ENCODE measurements at regions of chr5 and their contacts with region 1.

Region 1: GRCh38 chr5:175718401-175719108 is 60.7 kb downstream of the HRH2 start:
- DNase-seq: peak in 2 of 4 donors; percentile 44 to 90
- ATAC-seq: peak; percentile 58
- H3K4me3 ChIP-seq: no peak overlapping the region
- H3K27ac ChIP-seq: no peak overlapping the region
- H3K4me1 ChIP-seq: no peaks in the 10 kb centered on the region
- H3K27me3 ChIP-seq: peaks cover 0 to 9% of the 10 kb centered on the region in 2 donors
- CTCF ChIP-seq: peak; percentile 56 to 62

Region 2: GRCh38 chr5:175534070-175534932 is 184.3 kb before region 1 on chr5:
- intact Hi-C with region 1: loop called (anchors 5 to 10 kb)
- DNase-seq: peak; percentile 53 to 98 (median 80)
- ATAC-seq: peak; percentile 100
- H3K4me3 ChIP-seq: no peak overlapping the region
- H3K27ac ChIP-seq: no peak overlapping the region
- H3K4me1 ChIP-seq: peaks cover 0 to 15% of the 10 kb centered on the region in 2 donors
- H3K27me3 ChIP-seq: no peaks in the 10 kb centered on the region
- CTCF ChIP-seq: peak; percentile 97 to 98

Region 3: GRCh38 chr5:175752826-175753535 is 34.4 kb after region 1 on chr5:
- intact Hi-C with region 1: no loop called
- DNase-seq: no peak
- ATAC-seq: no peak
- H3K4me3 ChIP-seq: no peak overlapping the region
- H3K27ac ChIP-seq: no peak overlapping the region
- H3K4me1 ChIP-seq: no peaks in the 10 kb centered on the region
- H3K27me3 ChIP-seq: peaks cover 0 to 82% of the 10 kb centered on the region in 2 donors
- CTCF ChIP-seq: no peak

Measured in left lung (tissue), 14 donors.